H1 (cell line): ENCODE measurements at regions of chr3 and their contacts with region 1.

Region 1: DNA sequence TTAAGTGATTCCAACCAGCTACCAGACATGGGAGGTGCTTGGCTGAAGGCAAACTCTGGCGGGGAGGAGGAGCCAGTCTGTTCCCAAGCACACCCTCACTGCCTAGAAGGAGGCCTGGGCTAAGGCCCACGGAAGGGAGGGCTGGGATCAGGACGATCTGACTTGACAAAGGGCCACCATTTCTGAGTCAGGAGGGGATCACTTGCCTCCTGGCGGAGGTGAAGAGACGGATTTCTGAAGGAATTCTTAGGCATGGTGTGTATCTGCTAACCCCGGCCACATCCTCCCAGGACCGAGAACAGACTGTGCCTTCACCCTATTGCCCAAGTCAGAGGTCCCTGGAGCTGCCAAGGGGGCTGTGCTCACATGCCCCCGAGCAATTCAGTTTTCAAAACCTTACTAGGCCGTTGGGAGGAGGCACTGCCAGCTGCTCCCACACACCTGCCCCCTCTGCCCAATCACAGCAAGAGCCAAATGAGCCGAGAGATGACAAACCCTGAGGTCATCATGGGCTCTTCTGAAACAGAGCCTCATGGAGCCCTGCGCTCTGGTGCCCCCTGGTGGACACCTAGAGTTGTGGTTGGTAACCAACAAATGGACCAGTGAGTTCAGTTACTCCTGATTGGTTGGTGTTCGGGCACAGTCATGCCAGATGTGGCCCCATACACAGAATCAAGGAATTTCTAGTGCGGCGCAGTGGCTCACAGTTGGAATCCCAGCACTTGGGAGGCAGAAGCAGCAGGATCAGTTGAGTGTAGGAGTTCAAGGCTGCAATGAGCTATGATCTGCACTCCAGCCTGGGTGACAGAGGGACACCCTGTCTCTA is 6.5 kb upstream of the TNK2 start:
- DNase-seq: peak; percentile 97
- H3K4me3 ChIP-seq: peak overlapping the region in 2 of 4 experiments; percentile 14 to 31; a peak in 2 of 8 replicates
- H3K27ac ChIP-seq: peak overlapping the region; percentile 57
- H3K4me1 ChIP-seq: peaks cover 7 to 13% (median 11%) of the 10 kb centered on the region in 4 experiments
- H3K27me3 ChIP-seq: peaks cover 0 to 6% (median 4%) of the 10 kb centered on the region in 4 experiments; a peak in 4 of 7 replicates
- CTCF ChIP-seq: peak in 2 of 3 experiments; percentile 93 to 99; a peak in 3 of 4 replicates
- EP300 ChIP-seq: no peak
- POLR2A ChIP-seq: peak in 1 of 2 experiments; percentile 70; a peak in 1 of 3 replicates
- RAD21 ChIP-seq: peak; percentile 80 to 88

Region 2: DNA sequence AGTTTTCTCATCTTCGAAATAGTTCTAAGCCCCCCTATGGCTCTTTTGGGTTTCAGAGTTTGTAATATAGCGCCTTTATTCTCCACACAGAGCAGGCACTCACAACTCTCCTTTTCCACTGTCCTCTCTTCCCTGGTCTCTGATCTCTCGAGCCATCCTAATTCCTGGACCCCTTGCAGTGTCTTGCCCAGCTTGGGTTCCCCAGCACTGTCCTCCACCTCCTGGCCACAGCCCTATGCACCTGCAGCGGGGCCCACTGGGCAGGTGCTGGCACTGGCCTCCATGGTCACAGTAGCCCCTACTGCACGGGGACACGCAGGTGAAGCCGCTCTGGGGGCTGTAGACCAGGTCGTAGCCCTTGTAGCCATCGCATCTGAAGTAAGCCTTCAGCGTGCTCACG is 166.2 kb before region 1 on chr3:
- CTCF ChIA-PET with region 1: no interaction called
- POLR2A ChIA-PET with region 1: no interaction called
- DNase-seq: no peak
- H3K4me3 ChIP-seq: no peak overlapping the region
- H3K27ac ChIP-seq: no peak overlapping the region
- H3K4me1 ChIP-seq: no peaks in the 10 kb centered on the region; a peak in 1 of 7 replicates
- H3K27me3 ChIP-seq: peaks cover 0 to 19% (median 16%) of the 10 kb centered on the region in 4 experiments; a peak in 6 of 7 replicates
- CTCF ChIP-seq: no peak
- EP300 ChIP-seq: no peak
- POLR2A ChIP-seq: no peak
- RAD21 ChIP-seq: no peak

Region 3: GRCh38 chr3:195900436-195901375 is 14.2 kb before region 1 on chr3:
- CTCF ChIA-PET with region 1: interaction called, 51 read pairs
- POLR2A ChIA-PET with region 1: interaction called, 11 read pairs
- DNase-seq: no peak
- H3K4me3 ChIP-seq: no peak overlapping the region
- H3K27ac ChIP-seq: no peak overlapping the region
- H3K4me1 ChIP-seq: peaks cover 0 to 12% (median 3%) of the 10 kb centered on the region in 4 experiments; a peak in 6 of 7 replicates
- H3K27me3 ChIP-seq: no peaks in the 10 kb centered on the region
- CTCF ChIP-seq: no peak
- EP300 ChIP-seq: no peak
- POLR2A ChIP-seq: no peak
- RAD21 ChIP-seq: no peak